Thyroid gland (tissue), 4 donors: ENCODE measurements at regions of chr6 and their contacts with region 1.

Region 1: DNA sequence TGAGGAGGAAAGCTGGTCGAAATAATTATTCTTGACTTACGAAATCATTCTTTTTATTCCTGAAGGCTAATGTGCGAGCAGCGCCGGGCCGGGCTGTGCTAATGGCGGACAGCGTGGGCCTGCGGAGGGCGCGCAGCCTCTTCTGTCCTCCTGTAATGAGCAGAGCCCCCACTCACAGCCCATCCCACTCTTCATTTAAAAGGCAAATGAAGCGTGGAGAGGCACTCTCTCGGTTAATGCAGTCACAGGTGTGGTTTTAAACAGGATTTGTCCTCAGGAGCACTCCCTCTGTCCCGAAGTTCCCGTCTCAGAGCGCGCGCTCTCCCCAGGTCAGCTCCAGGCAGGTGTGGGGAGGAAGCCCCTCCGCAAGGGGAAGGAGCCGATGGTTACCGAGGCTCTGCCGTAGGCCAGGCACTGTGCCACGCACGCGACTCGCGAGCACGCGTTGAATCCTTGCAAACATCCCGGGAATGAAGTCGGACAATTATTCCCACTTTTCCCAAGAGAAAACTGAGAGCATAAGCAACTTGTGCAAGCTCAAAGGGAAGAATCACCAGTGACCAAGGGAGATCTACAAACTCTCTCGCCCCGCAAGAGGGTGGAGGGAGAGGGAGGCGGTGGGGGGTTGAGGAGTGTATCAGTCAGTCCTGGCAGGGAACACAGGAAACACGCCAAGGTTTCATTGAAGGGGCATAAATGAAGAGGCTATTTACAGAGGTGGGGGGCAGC is 35.5 kb upstream of the ZFAND3 start:
- DNase-seq: peak; percentile 43 to 48
- H3K4me3 ChIP-seq: peak overlapping the region in 2 of 3 donors; percentile 19 to 39
- H3K27ac ChIP-seq: peak overlapping the region in 2 of 3 donors; percentile 4 to 44
- H3K4me1 ChIP-seq: peaks cover 12 to 18% of the 10 kb centered on the region in 2 donors
- H3K27me3 ChIP-seq: no peaks in the 10 kb centered on the region
- CTCF ChIP-seq: peak in 2 of 6 experiments; percentile 9 to 14
- POLR2A ChIP-seq: peak in 1 of 2 donors; percentile 23

Region 2: DNA sequence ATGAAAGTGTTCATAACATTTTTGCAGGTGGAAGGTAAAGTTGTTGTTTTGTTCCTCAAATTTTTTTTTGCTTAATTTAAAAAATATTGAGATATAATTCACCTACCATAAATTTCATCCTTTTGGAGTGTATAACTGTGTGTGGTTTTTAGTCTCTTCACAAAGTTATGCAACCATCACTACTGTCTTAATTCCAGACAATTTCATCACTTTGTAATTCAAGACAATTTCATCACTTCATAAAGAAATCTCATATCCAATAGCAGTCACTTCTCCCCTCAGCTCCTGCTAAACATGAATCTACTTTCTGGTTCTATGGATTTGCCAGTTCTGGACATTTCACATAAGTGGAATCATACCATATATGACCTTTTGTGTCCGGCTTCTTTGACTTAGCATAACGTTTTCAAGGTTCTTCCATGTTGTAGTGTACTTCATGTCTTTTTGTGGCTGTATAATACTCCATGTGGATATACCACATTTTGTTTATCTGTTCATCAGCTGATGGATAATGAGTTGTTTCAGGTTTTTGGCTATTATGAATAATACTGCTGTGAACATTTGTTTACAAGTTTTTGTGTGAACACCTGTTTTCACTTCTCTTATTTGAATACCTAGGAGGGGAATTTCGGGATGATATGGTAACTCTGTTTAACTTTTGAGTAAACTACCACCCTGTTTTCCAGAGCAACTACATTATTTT is 54.4 kb after region 1 on chr6:
- intact Hi-C with region 1: no loop called
- DNase-seq: no peak
- H3K4me3 ChIP-seq: no peak overlapping the region
- H3K27ac ChIP-seq: no peak overlapping the region
- H3K4me1 ChIP-seq: peaks cover 26 to 29% of the 10 kb centered on the region in 2 donors
- H3K27me3 ChIP-seq: no peaks in the 10 kb centered on the region
- CTCF ChIP-seq: no peak
- POLR2A ChIP-seq: no peak

Region 3: GRCh38 chr6:38012573-38012972 is 228.6 kb after region 1 on chr6:
- intact Hi-C with region 1: loop called (anchors 10 kb)
- DNase-seq: peak in 1 of 2 donors; percentile 20
- H3K4me3 ChIP-seq: no peak overlapping the region
- H3K27ac ChIP-seq: no peak overlapping the region
- H3K4me1 ChIP-seq: peaks cover 22 to 23% of the 10 kb centered on the region in 2 donors
- H3K27me3 ChIP-seq: no peaks in the 10 kb centered on the region
- CTCF ChIP-seq: peak; percentile 21 to 57 (median 36)
- POLR2A ChIP-seq: no peak